GM18951 (cell line): ENCODE measurements at regions of chr7 and their contacts with region 1.

Region 1: GRCh38 chr7:5045558-5046396 is at the start of gene RBAK:
- POLR2A ChIP-seq: peak; percentile 92

Region 2: DNA sequence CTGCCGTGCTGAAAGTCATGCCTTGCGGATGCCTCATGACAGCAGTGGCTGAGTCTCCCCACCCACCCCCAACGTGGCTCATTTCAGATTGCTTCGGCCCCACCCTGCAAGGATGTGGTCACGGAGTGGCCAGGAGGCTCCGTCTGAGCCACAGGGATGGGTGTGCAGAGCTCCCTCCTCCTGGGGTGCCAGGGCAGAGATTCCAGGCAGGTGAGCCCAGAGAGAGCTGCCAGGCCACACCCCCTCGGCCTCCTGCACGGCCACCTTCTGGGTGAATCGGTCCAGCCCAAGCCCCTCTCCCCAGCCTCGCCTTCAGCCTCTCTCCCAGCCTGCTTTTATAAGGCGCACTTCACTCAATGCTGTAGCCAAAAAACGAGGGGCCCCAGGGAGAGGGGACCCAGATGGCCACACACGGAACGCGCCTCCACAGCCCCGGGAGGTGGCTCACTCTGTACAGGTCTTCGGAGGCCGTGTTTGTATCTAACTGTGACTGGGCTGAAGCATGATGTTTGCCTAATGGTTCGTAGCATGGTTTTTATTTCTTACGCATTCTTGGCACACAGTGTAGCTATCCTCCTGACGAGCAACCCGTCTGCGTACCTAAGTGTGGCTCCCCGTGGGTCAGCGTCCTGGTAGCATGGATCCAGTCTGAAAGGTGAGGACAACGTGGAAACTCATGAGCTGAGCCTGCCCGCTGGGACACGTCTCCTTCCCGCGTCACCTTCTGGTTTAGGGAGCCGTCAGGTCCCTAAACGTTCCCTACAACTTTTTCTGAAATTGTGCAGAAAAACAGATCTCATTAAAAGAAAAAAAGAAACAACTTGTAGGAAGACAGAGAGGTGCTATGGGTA is 777.4 kb before region 1 on chr7:
- in situ Hi-C with region 1: no loop called
- POLR2A ChIP-seq: no peak

Region 3: DNA sequence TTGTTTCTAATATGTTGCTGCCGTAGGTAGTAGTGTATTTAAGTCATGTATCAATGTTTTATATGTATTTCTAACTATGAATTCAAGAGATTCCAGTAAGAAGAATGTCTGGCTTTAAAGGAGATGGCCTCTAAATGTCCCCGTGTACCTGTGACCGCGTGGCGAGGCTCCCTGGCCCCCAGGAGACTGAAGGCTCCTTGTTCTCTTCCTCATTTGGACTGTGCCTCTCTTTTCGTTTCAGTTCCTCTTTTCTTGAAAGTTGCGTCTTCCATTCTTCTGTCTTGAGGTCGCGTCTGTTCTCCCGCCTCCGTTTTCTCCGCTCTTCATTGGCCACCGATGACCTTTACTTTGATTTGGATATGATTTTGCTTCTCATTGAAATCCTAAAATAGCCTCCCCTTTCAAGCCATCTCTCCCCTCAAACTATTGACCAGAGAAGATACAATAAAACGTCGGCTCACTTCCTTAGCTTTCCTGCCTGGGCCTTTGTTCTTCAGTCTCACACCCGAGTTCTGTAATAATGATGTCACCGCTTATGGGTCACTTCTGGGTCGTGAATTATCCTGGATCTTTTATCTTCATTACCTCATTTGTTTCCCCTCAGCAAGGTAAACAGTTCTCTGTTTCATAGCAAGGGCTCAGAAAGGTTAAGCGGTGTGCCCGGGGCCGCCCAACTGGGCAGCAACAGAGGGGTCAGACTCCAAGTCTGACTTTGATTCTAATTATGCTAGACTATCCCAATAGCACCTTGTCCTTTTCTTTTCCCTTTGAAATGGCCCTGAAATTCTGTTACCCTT is 173.0 kb after region 1 on chr7:
- in situ Hi-C with region 1: no loop called
- POLR2A ChIP-seq: peak; percentile 60

Region 4: GRCh38 chr7:5248201-5248885 is 202.6 kb after region 1 on chr7:
- in situ Hi-C with region 1: no loop called
- POLR2A ChIP-seq: no peak

Region 5: DNA sequence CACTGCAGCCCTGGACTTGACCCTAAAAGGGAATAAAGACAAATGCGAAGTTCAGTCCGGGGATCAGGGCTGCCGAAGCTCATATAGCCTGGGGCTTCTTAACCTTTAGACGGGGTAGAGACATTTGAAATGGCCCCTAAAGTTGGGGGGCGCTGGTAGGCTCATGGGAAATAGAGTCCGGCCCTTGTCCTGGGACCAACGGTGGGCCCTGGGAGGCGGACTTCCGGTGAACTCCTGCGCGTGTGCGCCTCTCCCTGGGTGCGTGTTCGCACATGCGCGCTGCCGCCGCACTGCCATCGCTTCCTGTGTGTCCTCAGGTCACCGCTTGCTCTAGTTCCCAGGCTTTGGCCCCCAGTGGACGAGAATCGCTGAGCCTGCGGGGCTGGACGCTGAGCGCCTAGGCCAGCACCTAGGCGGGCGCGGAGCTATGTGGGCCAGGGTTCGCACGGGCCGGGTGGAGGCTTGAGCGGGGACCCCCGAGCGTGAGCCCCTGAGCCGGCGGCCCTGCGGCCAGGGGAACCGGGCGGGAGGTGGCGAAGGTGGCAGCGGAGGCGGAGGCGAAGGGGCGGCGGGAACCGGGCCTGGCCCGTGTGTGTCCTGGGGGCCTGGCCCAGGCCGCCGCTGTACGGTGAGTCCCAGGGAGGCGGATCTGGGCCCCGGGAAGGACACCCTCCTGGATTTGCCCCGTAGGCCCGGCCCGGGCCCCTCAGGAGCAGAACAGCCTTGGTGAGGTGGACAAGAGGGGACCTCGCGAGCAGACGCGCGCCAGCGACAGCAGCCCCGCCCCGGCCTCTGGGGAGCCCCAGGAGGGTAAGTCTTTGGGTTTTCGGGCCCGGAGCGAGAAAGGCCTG is 1683.9 kb after region 1 on chr7:
- in situ Hi-C with region 1: loop called (anchors 10 kb)
- POLR2A ChIP-seq: peak; percentile 89